HepG2 (cell line): ENCODE measurements at regions of chr4 and their contacts with region 1.

Region 1: DNA sequence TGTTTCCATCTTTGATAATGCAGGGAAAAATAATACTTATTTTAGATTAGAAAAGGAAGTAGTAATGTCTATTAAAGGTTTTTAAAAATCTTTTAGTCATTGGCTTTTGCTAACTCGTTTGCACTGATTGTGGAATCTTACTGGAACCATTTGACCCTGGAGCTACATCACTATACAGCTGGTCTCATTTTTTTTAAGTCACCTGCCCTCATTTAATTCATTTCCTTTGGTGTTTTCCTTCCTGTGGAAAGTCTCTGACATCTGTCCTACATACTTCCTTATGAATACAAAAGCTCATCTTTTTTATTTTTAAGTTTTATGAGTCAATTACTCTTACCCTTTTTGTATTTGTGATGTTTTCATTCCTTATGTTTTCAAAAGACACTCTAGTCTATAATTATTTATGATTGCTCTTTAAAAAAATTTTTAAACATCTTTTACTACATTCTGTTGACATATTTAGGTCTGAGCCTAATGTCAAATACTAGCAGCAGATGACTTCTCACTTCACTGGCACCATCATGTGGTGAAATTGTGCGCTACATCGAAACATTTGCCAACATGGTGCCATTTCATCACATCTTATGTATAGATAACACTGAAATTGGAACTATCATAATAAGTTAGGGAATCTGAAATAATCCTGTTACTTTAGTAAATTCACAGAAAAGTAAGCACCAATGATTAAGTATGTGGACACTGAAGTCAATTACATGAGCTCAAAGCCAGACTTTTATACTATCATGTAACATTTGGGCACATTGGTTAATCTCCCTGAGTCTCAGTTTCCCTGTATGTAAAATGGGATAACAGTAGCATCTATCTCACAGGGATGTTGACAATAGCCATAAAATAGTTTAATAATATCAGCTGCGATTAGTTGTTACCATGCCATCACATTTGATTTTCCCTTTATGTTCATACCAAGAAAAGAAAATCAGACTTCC is 9.4 kb upstream of the MMAA start:
- DNase-seq: peak; percentile 58
- ATAC-seq: peak; percentile 67
- H3K4me3 ChIP-seq: no peak overlapping the region
- H3K27ac ChIP-seq: no peak overlapping the region
- H3K4me1 ChIP-seq: no peaks in the 10 kb centered on the region
- H3K27me3 ChIP-seq: no peaks in the 10 kb centered on the region
- CTCF ChIP-seq: peak; percentile 78
- EP300 ChIP-seq: no peak
- POLR2A ChIP-seq: no peak
- RAD21 ChIP-seq: peak; percentile 57; the same call in 1 of the 2 replicates

Region 2: GRCh38 chr4:145234091-145234706 is 375.6 kb before region 1 on chr4:
- CTCF ChIA-PET with region 1: interaction called, 39 read pairs
- POLR2A ChIA-PET with region 1: no interaction called
- in situ Hi-C with region 1: no loop called
- intact Hi-C with region 1: loop called (anchors 1 kb)
- DNase-seq: peak; percentile 61
- ATAC-seq: peak; percentile 99
- H3K4me3 ChIP-seq: no peak overlapping the region
- H3K27ac ChIP-seq: no peak overlapping the region
- H3K4me1 ChIP-seq: no peaks in the 10 kb centered on the region
- H3K27me3 ChIP-seq: no peaks in the 10 kb centered on the region
- CTCF ChIP-seq: peak; percentile 79
- EP300 ChIP-seq: no peak
- POLR2A ChIP-seq: no peak
- RAD21 ChIP-seq: peak; percentile 77

Region 3: GRCh38 chr4:145709843-145710242 is 100.1 kb after region 1 on chr4:
- CTCF ChIA-PET with region 1: no interaction called
- POLR2A ChIA-PET with region 1: no interaction called
- in situ Hi-C with region 1: no loop called
- intact Hi-C with region 1: no loop called
- DNase-seq: no peak
- ATAC-seq: no peak
- H3K4me3 ChIP-seq: no peak overlapping the region
- H3K27ac ChIP-seq: no peak overlapping the region
- H3K4me1 ChIP-seq: no peaks in the 10 kb centered on the region
- H3K27me3 ChIP-seq: peaks cover 0 to 5% of the 10 kb centered on the region in 2 experiments; a peak in 1 of 5 replicates
- CTCF ChIP-seq: no peak
- EP300 ChIP-seq: no peak
- POLR2A ChIP-seq: no peak
- RAD21 ChIP-seq: no peak